GM12878 (cell line): ENCODE measurements at regions of chrX and their contacts with region 1.

Region 1: DNA sequence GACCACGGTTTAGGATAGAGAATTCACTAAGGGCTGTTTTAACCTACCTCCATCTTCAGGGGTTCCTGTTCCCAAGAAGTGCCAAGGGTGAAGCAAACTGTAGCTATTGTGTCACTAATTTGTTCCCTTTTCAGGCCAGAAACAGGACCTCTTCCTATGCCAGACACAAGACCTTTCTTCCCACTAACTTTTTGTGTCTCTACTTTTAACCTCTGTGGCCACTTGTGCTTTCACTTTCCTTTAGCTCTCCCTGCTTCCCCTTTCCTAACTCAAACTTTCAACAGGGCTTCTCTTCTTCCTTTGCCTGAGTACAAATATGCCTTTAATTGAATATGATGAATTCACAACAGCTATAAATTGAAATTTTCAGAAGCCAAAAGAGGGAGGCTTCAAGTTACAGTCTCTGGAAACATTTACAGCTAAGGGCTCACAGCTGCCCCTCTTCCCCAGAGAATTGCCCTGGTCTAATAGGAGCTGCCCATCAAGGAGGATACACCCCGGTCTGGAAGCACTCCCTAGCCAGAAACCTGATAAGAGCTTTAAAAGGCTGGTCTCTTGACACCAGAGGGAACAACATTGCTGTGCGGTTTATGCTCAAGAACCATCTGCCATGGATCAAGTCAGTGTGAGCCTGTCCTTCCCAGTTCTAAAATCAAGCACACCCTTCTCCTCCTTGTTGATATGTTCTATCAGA is 61.7 kb upstream of the PLS3 start:
- DNase-seq: no peak
- ATAC-seq: peak; percentile 29
- H3K4me3 ChIP-seq: 0 out of 2 replicates have a peak overlapping the region, but pooled peaks have one; percentile 22
- H3K27ac ChIP-seq: no peak overlapping the region
- H3K4me1 ChIP-seq: no peaks in the 10 kb centered on the region
- H3K27me3 ChIP-seq: no peaks in the 10 kb centered on the region
- CTCF ChIP-seq: no peak
- EP300 ChIP-seq: no peak
- POLR2A ChIP-seq: no peak
- RAD21 ChIP-seq: no peak

Region 2: GRCh38 chrX:115311601-115312001 is 187.7 kb before region 1 on chrX:
- CTCF ChIA-PET with region 1: no interaction called
- POLR2A ChIA-PET with region 1: no interaction called
- RAD21 ChIA-PET with region 1: no interaction called
- SMC1A ChIA-PET with region 1: no interaction called
- in situ Hi-C with region 1: no loop called
- intact Hi-C with region 1: no loop called
- DNase-seq: no peak
- ATAC-seq: peak; percentile 55
- H3K4me3 ChIP-seq: no peak overlapping the region
- H3K27ac ChIP-seq: no peak overlapping the region
- H3K4me1 ChIP-seq: no peaks in the 10 kb centered on the region
- H3K27me3 ChIP-seq: no peaks in the 10 kb centered on the region
- CTCF ChIP-seq: no peak
- EP300 ChIP-seq: no peak
- POLR2A ChIP-seq: no peak
- RAD21 ChIP-seq: no peak

Region 3: GRCh38 chrX:115467961-115468360 is 31.3 kb before region 1 on chrX:
- CTCF ChIA-PET with region 1: no interaction called
- POLR2A ChIA-PET with region 1: no interaction called
- RAD21 ChIA-PET with region 1: no interaction called
- SMC1A ChIA-PET with region 1: interaction called, 10 read pairs
- in situ Hi-C with region 1: no loop called
- intact Hi-C with region 1: no loop called
- DNase-seq: no peak
- ATAC-seq: no peak
- H3K4me3 ChIP-seq: no peak overlapping the region
- H3K27ac ChIP-seq: no peak overlapping the region
- H3K4me1 ChIP-seq: no peaks in the 10 kb centered on the region
- H3K27me3 ChIP-seq: no peaks in the 10 kb centered on the region
- CTCF ChIP-seq: no peak
- EP300 ChIP-seq: no peak
- POLR2A ChIP-seq: no peak
- RAD21 ChIP-seq: no peak